ENCODE measurements at regions of chr4 and their contacts with region 1.

Region 1: DNA sequence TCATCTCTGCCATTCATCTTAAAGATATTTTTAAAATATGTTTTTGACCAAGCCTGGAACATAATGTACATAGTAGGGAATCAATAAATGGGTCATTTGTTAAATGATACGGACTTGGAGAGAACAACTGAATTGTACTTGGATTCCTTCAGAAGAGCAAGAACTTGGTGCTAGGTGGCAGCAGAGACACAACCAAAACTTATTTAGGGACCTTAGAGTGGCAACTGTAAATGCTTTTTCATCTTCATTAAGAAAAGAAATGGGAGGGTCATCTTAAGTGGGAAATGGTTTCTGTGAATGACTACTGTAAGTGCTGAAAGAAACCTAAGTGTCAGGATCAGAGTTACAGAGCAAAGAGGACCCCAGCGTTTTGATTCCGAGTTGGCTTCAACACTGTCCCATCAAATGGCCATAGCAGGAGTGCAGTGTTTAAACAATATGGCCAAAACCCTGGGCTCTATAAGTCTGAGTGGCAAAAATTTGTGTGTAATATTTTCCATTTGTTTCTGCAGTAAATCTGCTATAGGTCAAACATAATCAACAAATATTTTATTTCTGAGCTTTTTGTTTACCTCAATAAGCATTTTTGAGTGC is 213.6 kb downstream of the PALLD start:
- DNase-seq: peak in 3 of 5 donors; percentile 39 to 44 (median 43)
- ATAC-seq: peak; percentile 50 to 75 (median 62)
- H3K4me3 ChIP-seq: no peak overlapping the region
- H3K27ac ChIP-seq: peak overlapping the region in 8 of 12 donors; percentile 21 to 84 (median 60)
- H3K4me1 ChIP-seq: peaks cover 0 to 29% (median 19%) of the 10 kb centered on the region in 12 donors
- H3K27me3 ChIP-seq: no peaks in the 10 kb centered on the region
- CTCF ChIP-seq: peak; percentile 37 to 75 (median 61)
- POLR2A ChIP-seq: no peak

Region 2: DNA sequence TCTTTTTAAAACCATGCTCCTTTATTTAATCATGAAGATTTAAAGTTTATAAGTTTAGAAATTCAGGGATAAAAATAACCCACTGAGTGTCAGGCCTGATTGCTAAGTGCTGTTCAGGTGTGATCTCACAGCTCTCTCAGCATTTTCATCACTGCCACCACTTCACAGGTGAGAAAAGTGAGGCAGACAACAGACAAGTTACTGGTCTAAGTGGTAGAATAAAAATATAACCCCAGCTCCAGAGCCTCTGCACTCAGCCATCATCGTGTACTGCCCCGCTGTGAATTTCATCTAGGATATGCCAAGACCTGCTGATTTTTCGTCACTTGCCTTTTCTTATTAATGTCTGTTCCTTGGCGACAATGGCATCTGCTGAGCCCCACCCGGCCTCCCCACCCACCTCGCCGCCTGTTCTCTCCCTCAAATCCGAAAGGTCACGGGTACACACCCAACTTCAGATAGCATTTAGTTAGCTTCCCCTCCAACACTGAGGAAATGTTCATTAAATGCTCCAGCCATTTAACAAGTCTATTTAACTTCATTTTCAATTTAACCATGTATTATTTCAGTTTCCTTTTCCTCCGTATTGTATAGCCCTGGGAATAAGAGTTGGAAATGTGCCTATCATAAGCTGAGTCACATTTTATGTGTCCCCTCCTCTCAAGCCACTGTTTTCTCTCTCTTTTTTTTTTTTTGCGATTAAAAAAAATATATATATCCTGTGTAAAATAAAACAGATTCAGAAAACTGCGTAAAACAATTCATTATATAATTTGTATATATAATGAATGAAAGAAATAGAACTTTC is 63.1 kb after region 1 on chr4:
- intact Hi-C with region 1: loop called in 1 of 10 experiments (anchors 5 kb)
- DNase-seq: peak in 2 of 5 donors; percentile 41 to 63
- ATAC-seq: peak; percentile 32 to 73 (median 59)
- H3K4me3 ChIP-seq: peak overlapping the region in 1 of 12 donors; percentile 18
- H3K27ac ChIP-seq: peak overlapping the region in 8 of 12 donors; percentile 9 to 70 (median 42)
- H3K4me1 ChIP-seq: peaks cover 0 to 51% (median 27%) of the 10 kb centered on the region in 12 donors
- H3K27me3 ChIP-seq: no peaks in the 10 kb centered on the region
- CTCF ChIP-seq: no peak
- POLR2A ChIP-seq: no peak

Region 3: DNA sequence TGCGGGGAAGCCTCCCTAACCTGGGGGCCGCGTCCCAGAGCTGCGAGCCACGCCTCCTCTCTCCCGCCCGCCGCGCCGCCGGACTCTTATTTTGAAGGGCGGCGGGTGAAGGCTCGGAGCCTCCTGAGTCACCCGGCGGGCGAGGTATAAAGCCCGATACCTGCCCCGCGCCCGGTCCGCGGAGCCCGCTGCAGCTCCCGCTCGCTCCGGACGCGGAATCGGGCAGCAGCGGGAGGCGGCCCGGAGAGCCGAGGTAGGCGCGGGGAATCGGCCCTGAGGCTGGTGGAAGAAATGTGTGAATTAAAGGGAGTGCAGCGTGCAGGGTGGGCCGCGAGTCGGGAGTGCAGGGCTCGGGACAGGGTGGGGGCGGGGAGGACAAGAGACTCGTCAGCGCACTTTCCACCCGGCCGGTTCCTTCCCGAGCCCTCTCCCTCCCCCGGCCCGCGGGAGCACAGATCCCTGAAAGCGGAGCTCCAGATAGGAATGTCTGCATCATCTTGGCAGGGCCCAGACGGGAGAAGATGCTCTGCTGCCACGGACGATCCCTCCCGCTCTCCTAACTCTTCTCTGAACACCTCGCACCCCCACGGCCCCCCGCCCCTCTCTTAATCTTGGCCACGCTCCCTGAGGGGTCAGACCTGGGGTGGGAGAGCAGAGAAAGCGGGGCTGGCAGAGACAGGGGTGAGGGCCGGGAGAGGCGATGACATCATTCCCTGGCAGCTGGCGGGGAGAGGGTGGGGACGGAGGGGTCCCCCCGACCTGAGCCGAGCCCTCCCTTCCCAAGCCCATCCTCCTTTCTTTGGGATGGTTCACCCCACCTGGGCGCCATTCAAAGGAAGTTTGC is 121.7 kb after region 1 on chr4:
- intact Hi-C with region 1: loop called in 6 of 10 experiments (anchors 5 to 10 kb)
- DNase-seq: peak; percentile 78 to 90 (median 87)
- ATAC-seq: peak; percentile 56 to 89 (median 86)
- H3K4me3 ChIP-seq: peak overlapping the region; percentile 61 to 95 (median 74)
- H3K27ac ChIP-seq: peak overlapping the region; percentile 80 to 97 (median 87)
- H3K4me1 ChIP-seq: peaks cover 0 to 54% (median 38%) of the 10 kb centered on the region in 12 donors
- H3K27me3 ChIP-seq: peaks cover 0 to 16% (median 0%) of the 10 kb centered on the region in 9 donors
- CTCF ChIP-seq: peak in 1 of 12 donors; percentile 13
- POLR2A ChIP-seq: peak; percentile 50 to 97

Region 4: DNA sequence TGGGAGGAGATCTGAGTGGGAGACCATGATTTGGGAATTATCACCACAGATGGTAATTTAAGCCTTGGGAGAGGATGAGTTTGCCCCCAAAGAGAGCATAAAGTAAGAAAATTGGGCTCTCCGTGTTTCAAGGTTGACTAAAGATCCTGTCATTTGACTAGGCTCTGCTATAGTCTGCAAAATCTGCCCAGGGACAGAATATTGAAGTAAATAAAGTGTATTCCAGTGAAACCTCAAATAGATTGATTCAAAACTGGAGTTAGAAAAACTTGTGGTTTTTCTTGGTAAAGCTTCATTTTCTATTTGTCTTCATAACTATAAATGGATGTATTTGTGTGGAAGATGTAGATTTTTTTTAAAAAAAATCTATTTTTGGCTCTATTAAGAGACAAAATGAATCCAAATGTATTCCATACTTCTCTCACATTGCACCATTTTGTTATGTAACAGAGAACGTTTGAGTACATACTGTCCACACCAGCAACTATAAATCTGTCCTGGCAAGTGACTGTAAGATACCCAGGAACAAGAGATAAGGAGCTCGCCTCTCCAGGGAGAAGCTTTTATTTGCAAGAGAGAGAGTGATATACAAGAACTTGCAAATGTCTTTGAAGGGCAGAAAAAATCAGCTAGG is 129.4 kb after region 1 on chr4:
- intact Hi-C with region 1: loop called in 5 of 10 experiments (anchors 5 to 10 kb)
- DNase-seq: no peak
- ATAC-seq: peak; percentile 54 to 83 (median 64)
- H3K4me3 ChIP-seq: no peak overlapping the region
- H3K27ac ChIP-seq: peak overlapping the region; percentile 47 to 97 (median 86)
- H3K4me1 ChIP-seq: peaks cover 5 to 93% (median 57%) of the 10 kb centered on the region in 12 donors
- H3K27me3 ChIP-seq: no peaks in the 10 kb centered on the region
- CTCF ChIP-seq: no peak
- POLR2A ChIP-seq: no peak

Region 5: DNA sequence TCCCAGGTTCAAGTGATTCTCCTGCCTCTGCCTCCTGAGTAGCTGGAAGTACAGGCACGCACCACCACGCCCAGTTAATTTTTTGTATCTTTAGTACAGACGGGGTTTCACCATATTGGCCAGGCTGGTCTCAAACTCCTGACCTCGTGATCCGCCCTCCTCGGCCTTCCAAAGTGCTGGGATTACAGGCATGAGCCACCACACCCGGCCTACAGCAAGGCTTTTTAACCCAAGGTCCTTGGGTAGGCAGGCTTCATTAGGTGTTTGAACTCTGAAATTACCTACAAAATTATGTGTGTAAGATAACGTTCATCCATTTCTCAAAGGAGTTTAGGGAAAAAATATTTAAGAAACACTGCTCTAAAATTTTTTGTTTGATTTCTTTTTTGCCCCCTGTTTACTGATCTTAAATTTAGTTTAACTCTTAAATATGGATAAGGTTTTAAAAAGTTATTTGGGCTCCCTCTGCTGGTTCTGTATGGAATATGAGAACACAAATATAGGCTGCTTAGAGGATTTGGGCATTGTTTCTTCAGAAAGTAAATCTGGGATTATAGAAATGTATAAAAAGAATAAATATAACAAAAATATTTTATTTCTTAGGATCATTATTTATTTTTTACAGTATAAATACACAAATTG is 206.8 kb after region 1 on chr4:
- intact Hi-C with region 1: loop called (anchors 2 to 5 kb)
- DNase-seq: no peak
- ATAC-seq: no peak
- H3K4me3 ChIP-seq: no peak overlapping the region
- H3K27ac ChIP-seq: peak overlapping the region in 2 of 12 donors; percentile 8 to 49
- H3K4me1 ChIP-seq: peaks cover 0 to 20% (median 2%) of the 10 kb centered on the region in 12 donors
- H3K27me3 ChIP-seq: no peaks in the 10 kb centered on the region
- CTCF ChIP-seq: peak; percentile 36 to 73 (median 60)
- POLR2A ChIP-seq: no peak

Region 6: GRCh38 chr4:169010125-169011023 is 299.9 kb after region 1 on chr4 and contains the start of gene CBR4:
- intact Hi-C with region 1: loop called in 1 of 10 experiments (anchors 10 kb)
- DNase-seq: peak; percentile 97 to 99 (median 99)
- ATAC-seq: peak; percentile 99
- H3K4me3 ChIP-seq: peak within 1 kb of the TSS; percentile 49 to 89 (median 74)
- H3K27ac ChIP-seq: peak within 1 kb of the TSS; percentile 76 to 98 (median 94)
- H3K4me1 ChIP-seq: peaks cover 0 to 45% (median 27%) of the 10 kb centered on the region in 12 donors
- H3K27me3 ChIP-seq: no peaks in the 10 kb centered on the region
- CTCF ChIP-seq: peak in 9 of 12 donors; percentile 24 to 49 (median 39)
- POLR2A ChIP-seq: peak in 1 of 2 donors; percentile 95
- total RNA-seq, gene CBR4: 17.2 to 26.5 (median 24.2) TPM

Region 7: DNA sequence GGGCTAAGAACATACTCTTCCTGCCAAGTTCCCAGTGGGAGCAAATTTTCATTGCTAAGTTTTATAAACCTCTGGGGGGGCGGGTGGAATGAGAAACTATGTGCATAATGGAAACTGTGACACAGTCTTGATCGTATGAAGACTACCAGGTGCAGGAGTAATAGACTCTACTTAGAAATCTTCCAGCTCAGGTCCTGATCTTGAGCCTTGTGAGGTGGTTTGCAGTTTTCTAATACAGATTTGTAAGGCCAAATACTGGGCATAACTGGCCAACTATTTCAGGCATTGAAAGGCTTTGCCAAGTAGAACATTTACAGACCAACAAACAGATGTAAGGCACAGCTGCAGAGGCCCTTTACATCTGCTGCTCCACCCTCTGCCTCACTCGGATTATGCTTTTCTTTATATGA is 389.3 kb after region 1 on chr4:
- intact Hi-C with region 1: no loop called
- DNase-seq: peak in 3 of 5 donors; percentile 35 to 59 (median 48)
- ATAC-seq: peak; percentile 56 to 82 (median 71)
- H3K4me3 ChIP-seq: no peak overlapping the region
- H3K27ac ChIP-seq: peak overlapping the region in 11 of 12 donors; percentile 22 to 77 (median 66)
- H3K4me1 ChIP-seq: peaks cover 0 to 34% (median 25%) of the 10 kb centered on the region in 12 donors
- H3K27me3 ChIP-seq: no peaks in the 10 kb centered on the region
- CTCF ChIP-seq: no peak
- POLR2A ChIP-seq: no peak

Measured in heart left ventricle (tissue), 16 donors.